Caco-2 (cell line): ENCODE measurements at regions of chr14 and their contacts with region 1.

Region 1: DNA sequence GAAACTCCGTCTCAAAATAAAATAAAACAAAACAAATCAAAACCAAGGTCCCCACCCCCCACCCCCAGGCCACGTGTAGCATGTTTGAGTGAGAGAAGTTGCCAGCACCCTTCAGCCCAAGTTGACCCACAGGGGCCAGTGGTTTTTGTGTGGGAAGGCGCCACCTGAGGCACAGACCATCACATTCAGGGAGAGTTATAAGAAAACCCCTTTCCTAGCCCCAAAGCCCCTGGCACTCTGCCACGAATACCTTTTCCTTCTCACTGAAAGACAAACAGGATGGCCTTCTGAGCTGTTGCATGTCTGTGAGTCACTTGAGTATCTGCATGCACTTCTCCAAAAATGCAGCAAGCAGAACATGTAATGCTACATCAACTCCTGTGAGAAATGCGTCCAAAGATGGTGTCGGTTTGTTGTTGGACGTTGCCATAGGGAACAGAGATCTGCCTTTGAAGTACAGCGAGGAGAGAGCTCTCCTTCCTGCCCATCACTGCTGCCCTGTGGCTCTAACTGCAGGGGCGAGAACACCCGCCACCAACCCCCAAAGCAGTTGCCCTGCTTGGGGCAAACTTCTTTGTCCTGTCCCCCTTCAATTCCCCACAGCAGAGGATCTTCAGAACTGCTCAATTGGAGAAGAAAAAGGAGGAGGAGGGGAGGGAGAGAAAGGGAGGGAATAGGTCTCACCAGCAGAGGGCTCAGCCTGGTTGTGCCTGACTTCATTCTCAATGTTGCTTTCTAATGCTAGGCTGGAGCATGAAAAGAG is 2.7 kb upstream of the TRAF3 start:
- DNase-seq: peak; percentile 58 to 67
- H3K4me3 ChIP-seq: no peak overlapping the region
- H3K4me3 Mint-ChIP-seq: no peak overlapping the region
- H3K27ac Mint-ChIP-seq: peak overlapping the region; percentile 64
- H3K4me1 ChIP-seq: peaks cover 13% of the 10 kb centered on the region
- H3K4me1 Mint-ChIP-seq: peaks cover 8% of the 10 kb centered on the region
- H3K27me3 ChIP-seq: no peaks in the 10 kb centered on the region
- H3K27me3 Mint-ChIP-seq: no peaks in the 10 kb centered on the region
- CTCF ChIP-seq: peak; percentile 69 to 78

Region 2: DNA sequence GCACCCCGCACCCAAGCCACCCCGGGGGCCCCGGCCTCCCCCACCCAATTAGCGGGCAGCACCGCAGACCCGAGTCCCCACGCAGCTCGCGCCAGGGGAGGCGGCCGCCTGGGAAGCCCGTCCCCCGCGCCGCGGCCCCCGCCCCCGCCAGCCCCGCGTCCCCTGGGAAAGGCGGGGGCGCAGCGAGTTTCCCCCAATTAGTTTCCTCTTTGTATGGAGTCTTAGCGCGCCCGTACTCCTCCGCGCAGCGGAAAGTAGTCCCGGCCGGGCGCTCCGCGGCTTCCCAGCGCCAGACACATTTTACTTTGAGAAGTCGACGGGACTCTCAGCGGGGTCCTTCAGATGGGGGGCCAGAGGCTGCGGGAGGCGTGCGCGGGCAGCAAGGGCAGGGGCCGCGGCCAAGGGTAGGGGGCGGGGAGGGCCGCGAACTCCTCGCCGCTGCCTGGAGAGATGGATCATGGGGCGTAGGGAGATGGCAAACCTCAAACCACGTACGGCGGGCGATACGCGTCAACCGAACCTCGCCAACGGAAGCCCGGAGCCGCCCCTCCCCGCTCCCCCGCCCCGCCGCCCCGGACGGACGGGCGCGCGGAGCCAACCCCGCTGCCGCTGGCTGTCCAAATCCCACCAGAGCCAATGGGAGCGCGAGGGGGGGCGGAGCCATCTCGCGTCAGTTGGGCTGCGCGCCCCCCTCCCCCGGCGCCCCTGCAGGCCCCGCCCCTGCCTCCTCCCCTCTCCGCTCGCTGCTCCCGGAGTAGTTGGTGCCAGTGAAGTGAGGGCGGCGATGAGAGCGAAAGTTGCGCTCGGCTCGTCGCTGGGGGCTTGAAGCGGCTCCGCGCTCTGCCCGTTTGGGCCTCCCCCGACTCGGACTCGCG is 182.4 kb before region 1 on chr14 and contains the start of gene RCOR1:
- CTCF ChIA-PET with region 1: interaction called, 7 read pairs
- POLR2A ChIA-PET with region 1: no interaction called
- intact Hi-C with region 1: loop called (anchors 5 kb)
- DNase-seq: peak; percentile 97 to 98
- H3K4me3 ChIP-seq: peak within 1 kb of the TSS; percentile 99
- H3K4me3 Mint-ChIP-seq: peak within 1 kb of the TSS; percentile 79
- H3K27ac Mint-ChIP-seq: peak within 1 kb of the TSS; percentile 82
- H3K4me1 ChIP-seq: peaks cover 29% of the 10 kb centered on the region
- H3K4me1 Mint-ChIP-seq: peaks cover 18% of the 10 kb centered on the region
- H3K27me3 ChIP-seq: no peaks in the 10 kb centered on the region
- H3K27me3 Mint-ChIP-seq: no peaks in the 10 kb centered on the region
- CTCF ChIP-seq: no peak
- total RNA-seq, gene RCOR1: 31.0 and 33.6 TPM in 2 replicates

Region 3: DNA sequence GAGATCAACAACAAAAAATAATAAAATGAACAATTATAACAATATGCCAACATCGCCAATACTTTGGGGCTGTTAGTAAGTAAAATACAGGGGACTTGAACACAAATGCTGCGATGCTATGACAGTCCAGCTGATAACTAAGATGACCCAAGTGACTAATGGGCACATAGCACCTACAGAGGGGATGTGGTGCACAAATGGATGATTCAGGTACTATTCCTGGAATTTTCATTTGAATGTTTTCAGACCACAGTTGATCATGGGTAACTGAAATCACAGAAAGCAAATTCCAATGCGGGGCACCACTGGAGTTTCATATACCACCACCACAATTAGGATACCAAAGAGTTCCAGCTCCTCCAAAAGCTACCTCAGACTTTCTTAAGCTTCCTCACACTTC is 99.2 kb before region 1 on chr14:
- CTCF ChIA-PET with region 1: no interaction called
- POLR2A ChIA-PET with region 1: no interaction called
- intact Hi-C with region 1: no loop called
- DNase-seq: no peak
- H3K4me3 ChIP-seq: no peak overlapping the region
- H3K4me3 Mint-ChIP-seq: no peak overlapping the region
- H3K27ac Mint-ChIP-seq: no peak overlapping the region
- H3K4me1 ChIP-seq: no peaks in the 10 kb centered on the region
- H3K4me1 Mint-ChIP-seq: no peaks in the 10 kb centered on the region
- H3K27me3 ChIP-seq: no peaks in the 10 kb centered on the region
- H3K27me3 Mint-ChIP-seq: no peaks in the 10 kb centered on the region
- CTCF ChIP-seq: no peak

Region 4: DNA sequence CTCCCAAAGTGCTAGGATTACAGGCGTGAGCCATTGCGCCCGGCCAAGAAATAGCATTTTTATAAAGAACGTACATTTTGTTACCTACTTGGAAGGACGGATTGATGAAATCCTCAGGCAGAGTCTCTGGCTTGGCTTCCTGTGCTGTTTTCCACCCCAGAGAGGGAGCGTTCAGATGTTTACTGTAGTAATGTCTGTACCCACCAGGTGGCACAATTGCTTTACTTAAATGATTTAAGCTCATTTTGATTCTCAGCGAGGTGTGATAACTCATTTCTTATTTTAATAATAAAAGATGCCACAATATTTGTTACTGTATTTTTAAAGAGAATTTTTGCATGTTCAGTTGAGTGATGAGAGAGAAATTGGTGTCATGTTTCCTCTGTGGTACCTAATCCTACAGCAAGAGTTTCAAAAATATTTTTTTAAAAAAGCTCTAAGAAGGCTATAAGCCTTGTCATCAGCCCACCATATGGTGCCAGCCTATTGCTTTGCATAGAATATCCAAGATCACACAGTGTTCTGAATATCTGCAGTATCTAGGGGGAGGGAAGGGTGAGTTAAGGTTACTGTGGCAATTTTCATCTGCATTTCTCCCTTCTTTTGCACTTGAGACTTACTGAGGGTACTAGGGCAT is 79.9 kb before region 1 on chr14:
- CTCF ChIA-PET with region 1: interaction called, 28 read pairs
- POLR2A ChIA-PET with region 1: no interaction called
- intact Hi-C with region 1: loop called (anchors 2 kb)
- DNase-seq: peak; percentile 45 to 71
- H3K4me3 ChIP-seq: no peak overlapping the region
- H3K4me3 Mint-ChIP-seq: no peak overlapping the region
- H3K27ac Mint-ChIP-seq: no peak overlapping the region
- H3K4me1 ChIP-seq: peaks cover 51% of the 10 kb centered on the region
- H3K4me1 Mint-ChIP-seq: peaks cover 39% of the 10 kb centered on the region
- H3K27me3 ChIP-seq: no peaks in the 10 kb centered on the region
- H3K27me3 Mint-ChIP-seq: no peaks in the 10 kb centered on the region
- CTCF ChIP-seq: peak; percentile 55 to 56

Region 5: GRCh38 chr14:102878174-102878969 is 103.8 kb after region 1 on chr14:
- CTCF ChIA-PET with region 1: no interaction called
- POLR2A ChIA-PET with region 1: interaction called, 4 read pairs
- intact Hi-C with region 1: loop called (anchors 10 kb)
- DNase-seq: peak in 1 of 2 experiments; percentile 43
- H3K4me3 ChIP-seq: no peak overlapping the region
- H3K4me3 Mint-ChIP-seq: no peak overlapping the region
- H3K27ac Mint-ChIP-seq: no peak overlapping the region
- H3K4me1 ChIP-seq: peaks cover 17% of the 10 kb centered on the region
- H3K4me1 Mint-ChIP-seq: peaks cover 12% of the 10 kb centered on the region
- H3K27me3 ChIP-seq: no peaks in the 10 kb centered on the region
- H3K27me3 Mint-ChIP-seq: no peaks in the 10 kb centered on the region
- CTCF ChIP-seq: peak in 1 of 2 experiments; percentile 8

Region 6: GRCh38 chr14:102922490-102923200 is 148.1 kb after region 1 on chr14 and contains the start of gene AMN:
- CTCF ChIA-PET with region 1: interaction called, 3 read pairs
- POLR2A ChIA-PET with region 1: no interaction called
- intact Hi-C with region 1: loop called (anchors 2 kb)
- DNase-seq: peak; percentile 88 to 91
- H3K4me3 ChIP-seq: peak within 1 kb of the TSS; percentile 94
- H3K4me3 Mint-ChIP-seq: no peak within 1 kb of the TSS
- H3K27ac Mint-ChIP-seq: no peak within 1 kb of the TSS
- H3K4me1 ChIP-seq: peaks cover 25% of the 10 kb centered on the region
- H3K4me1 Mint-ChIP-seq: no peaks in the 10 kb centered on the region
- H3K27me3 ChIP-seq: no peaks in the 10 kb centered on the region
- H3K27me3 Mint-ChIP-seq: no peaks in the 10 kb centered on the region
- CTCF ChIP-seq: no peak
- total RNA-seq, gene AMN: 70.7 TPM in 2 replicates